ENCODE measurements at regions of chr16 and their contacts with region 1.

Region 1: GRCh38 chr16:27235055-27235937 is 32.0 kb downstream of the KDM8 start:
- DNase-seq: peak; percentile 88 to 89
- ATAC-seq: peak; percentile 57 to 89 (median 80)
- H3K4me3 ChIP-seq: peak overlapping the region in 6 of 10 donors; percentile 5 to 36 (median 14)
- H3K27ac ChIP-seq: peak overlapping the region in 9 of 10 donors; percentile 24 to 92 (median 62)
- H3K4me1 ChIP-seq: peaks cover 11 to 76% (median 37%) of the 10 kb centered on the region in 9 donors
- H3K27me3 ChIP-seq: no peaks in the 10 kb centered on the region
- CTCF ChIP-seq: peak; percentile 63 to 91 (median 83)

Region 2: GRCh38 chr16:26623442-26623841 is 611.9 kb before region 1 on chr16:
- intact Hi-C with region 1: no loop called
- DNase-seq: no peak
- ATAC-seq: no peak
- H3K4me3 ChIP-seq: no peak overlapping the region
- H3K27ac ChIP-seq: no peak overlapping the region
- H3K4me1 ChIP-seq: no peaks in the 10 kb centered on the region
- H3K27me3 ChIP-seq: peaks cover 0 to 4% (median 0%) of the 10 kb centered on the region in 7 donors
- CTCF ChIP-seq: no peak

Region 3: GRCh38 chr16:27286451-27286850 is 51.2 kb after region 1 on chr16:
- intact Hi-C with region 1: loop called in 1 of 10 experiments (anchors 10 kb)
- DNase-seq: peak in 1 of 2 donors; percentile 53
- ATAC-seq: peak; percentile 62 to 92 (median 84)
- H3K4me3 ChIP-seq: no peak overlapping the region
- H3K27ac ChIP-seq: peak overlapping the region in 8 of 10 donors; percentile 9 to 87 (median 48)
- H3K4me1 ChIP-seq: peaks cover 3 to 31% (median 13%) of the 10 kb centered on the region in 9 donors
- H3K27me3 ChIP-seq: no peaks in the 10 kb centered on the region
- CTCF ChIP-seq: no peak

Region 4: DNA sequence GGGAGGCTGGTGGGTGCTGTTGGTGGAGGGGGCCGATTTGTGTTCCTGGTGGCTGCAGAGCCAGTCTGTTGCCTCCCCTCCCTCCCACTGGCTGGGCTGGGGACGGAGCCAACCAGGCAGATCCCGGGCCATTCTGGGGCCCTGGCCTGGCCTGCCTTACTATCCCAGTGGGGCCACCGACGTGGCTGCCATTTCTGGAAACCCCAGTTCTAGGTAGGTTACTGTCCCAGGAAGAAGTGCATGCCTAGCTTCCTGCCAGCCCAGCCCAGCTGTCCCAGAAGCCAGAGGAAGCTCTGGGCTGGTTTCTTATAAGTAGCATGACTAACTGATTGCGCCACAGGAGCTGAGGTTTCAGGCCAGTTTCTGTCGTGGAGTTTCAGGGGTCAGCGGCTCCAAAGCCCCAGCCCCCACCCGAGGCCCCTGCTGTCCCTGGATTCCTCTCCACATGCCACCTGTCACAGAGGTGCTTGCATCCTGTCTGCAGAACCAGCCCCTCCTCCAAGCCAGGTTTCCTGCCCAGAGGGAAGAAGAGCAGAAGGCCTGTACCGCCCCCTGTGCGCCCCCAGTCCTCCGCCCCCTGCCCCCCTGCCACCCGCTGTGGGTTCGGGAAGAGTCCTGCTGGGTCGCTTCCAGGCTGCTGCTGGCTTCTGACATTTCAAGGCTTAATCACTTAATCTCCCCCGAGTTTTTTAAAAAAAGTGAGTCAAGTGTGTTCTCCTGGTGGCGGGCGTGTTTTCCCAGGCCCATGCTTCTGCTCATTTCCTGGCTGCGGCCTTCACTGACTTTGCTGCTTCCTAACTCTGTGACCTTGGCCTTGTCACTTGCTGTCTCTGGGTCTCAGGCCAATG is 91.7 kb after region 1 on chr16:
- intact Hi-C with region 1: loop called in 1 of 10 experiments (anchors 5 kb)
- DNase-seq: peak; percentile 63 to 73
- ATAC-seq: peak; percentile 36 to 90 (median 72)
- H3K4me3 ChIP-seq: peak overlapping the region in 2 of 10 donors; percentile 14 to 35
- H3K27ac ChIP-seq: peak overlapping the region; percentile 50 to 100 (median 86)
- H3K4me1 ChIP-seq: peaks cover 9 to 99% (median 47%) of the 10 kb centered on the region in 9 donors
- H3K27me3 ChIP-seq: no peaks in the 10 kb centered on the region
- CTCF ChIP-seq: peak in 2 of 9 donors; percentile 4 to 9

Region 5: GRCh38 chr16:27367461-27368357 is 132.4 kb after region 1 on chr16:
- intact Hi-C with region 1: loop called in 8 of 10 experiments (anchors 1 to 5 kb)
- DNase-seq: peak; percentile 82
- ATAC-seq: peak; percentile 87 to 94 (median 90)
- H3K4me3 ChIP-seq: peak overlapping the region in 7 of 10 donors; percentile 20 to 41 (median 32)
- H3K27ac ChIP-seq: peak overlapping the region in 9 of 10 donors; percentile 38 to 87 (median 53)
- H3K4me1 ChIP-seq: peaks cover 0 to 36% (median 13%) of the 10 kb centered on the region in 9 donors
- H3K27me3 ChIP-seq: no peaks in the 10 kb centered on the region
- CTCF ChIP-seq: peak; percentile 77 to 92 (median 86)

Region 6: GRCh38 chr16:27455700-27456099 is 220.4 kb after region 1 on chr16:
- intact Hi-C with region 1: loop called in 5 of 10 experiments (anchors 5 to 10 kb)
- DNase-seq: no peak
- ATAC-seq: peak in 7 of 8 donors; percentile 4 to 79 (median 26)
- H3K4me3 ChIP-seq: no peak overlapping the region
- H3K27ac ChIP-seq: peak overlapping the region in 1 of 10 donors; percentile 40
- H3K4me1 ChIP-seq: peaks cover 1 to 35% (median 25%) of the 10 kb centered on the region in 9 donors
- H3K27me3 ChIP-seq: peaks cover 0 to 11% (median 5%) of the 10 kb centered on the region in 7 donors
- CTCF ChIP-seq: no peak